ENCODE measurements at regions of chr6 and their contacts with region 1.

Region 1: DNA sequence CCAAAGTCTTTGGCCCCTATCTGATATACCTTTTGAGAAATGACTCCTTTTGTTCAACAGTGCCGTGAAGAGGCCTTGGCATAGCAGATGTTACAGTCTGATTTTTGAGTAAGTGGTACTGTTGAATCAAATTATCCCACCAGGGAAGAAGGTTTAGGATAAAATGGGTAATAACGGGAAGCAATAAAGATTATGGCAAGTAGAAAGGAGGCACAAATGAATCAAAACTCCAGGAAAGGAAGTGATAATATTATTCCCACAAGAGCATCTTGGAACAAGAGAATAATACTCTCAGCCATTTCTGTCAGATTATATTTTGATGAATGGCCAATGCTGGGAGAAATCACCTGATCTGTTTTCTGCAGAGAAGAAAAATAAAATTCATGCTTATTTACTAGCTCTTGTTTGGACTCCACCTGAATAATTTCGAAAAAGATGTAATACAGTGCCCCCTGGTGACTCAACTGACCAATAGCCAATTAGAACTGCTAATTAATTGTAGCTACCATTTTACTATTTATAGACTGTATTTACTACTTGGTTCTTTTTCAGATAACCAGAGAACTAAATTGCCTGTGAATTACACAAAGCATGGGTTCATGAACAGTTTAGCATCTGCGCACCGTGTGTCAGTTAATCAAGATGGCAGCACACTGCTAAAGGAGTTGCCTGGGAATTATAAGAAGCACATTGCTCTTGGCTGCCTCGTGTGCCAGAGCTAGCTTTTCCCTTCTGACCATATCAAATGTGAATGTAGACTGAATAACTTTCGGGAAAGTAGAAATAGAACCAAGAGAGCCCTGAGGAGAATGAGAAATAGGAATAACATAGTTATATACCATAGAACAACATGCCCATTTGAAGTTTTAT is 78.5 kb upstream of the TRDN start:
- DNase-seq: no peak
- H3K4me3 ChIP-seq: no peak overlapping the region
- H3K27ac ChIP-seq: no peak overlapping the region
- H3K4me1 ChIP-seq: no peaks in the 10 kb centered on the region
- H3K27me3 ChIP-seq: no peaks in the 10 kb centered on the region
- CTCF ChIP-seq: peak in 7 of 11 experiments; percentile 6 to 49 (median 24)
- POLR2A ChIP-seq: no peak

Region 2: DNA sequence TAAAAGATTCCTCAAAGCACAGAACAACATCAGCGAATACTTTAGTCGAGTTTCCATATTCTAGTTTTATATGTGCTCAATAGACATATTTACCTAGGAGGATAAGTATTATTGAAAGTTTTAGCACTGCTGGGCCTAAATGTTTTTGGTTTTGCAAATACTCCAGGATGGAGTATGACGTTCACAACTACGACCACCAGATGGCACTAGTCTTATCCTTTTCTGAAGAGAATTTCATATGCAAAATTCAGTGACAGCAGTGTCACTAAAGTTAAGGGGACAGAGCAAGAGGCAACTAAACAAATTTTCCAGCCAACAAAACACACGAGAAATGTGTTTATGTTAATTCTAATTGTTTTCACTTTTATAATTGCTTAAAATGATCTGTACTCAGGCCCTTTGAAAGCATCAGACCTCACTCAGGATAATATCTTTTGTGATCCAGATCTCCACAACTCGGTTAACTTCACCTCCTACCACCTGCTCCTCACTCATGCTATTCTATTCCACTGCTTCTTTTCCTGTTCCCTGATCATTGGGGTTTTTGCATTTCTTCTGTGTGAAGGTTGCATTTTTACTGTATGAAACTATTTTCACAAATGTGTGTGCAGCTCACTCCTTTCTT is 299.3 kb before region 1 on chr6:
- intact Hi-C with region 1: loop called (anchors 10 kb)
- DNase-seq: no peak
- H3K4me3 ChIP-seq: no peak overlapping the region
- H3K27ac ChIP-seq: no peak overlapping the region
- H3K4me1 ChIP-seq: no peaks in the 10 kb centered on the region
- H3K27me3 ChIP-seq: no peaks in the 10 kb centered on the region
- CTCF ChIP-seq: peak in 9 of 11 experiments; percentile 32 to 67 (median 53)
- POLR2A ChIP-seq: no peak

Measured in spleen (tissue), 13 donors.